Stomach (tissue), 19 donors: ENCODE measurements at regions of chr3 and their contacts with region 1.

Region 1: GRCh38 chr3:47522082-47522987 is 8.8 kb upstream of the ELP6 start:
- DNase-seq: peak; percentile 83 to 95
- H3K4me3 ChIP-seq: no peak overlapping the region
- H3K27ac ChIP-seq: no peak overlapping the region
- H3K4me1 ChIP-seq: peaks cover 0 to 12% (median 7%) of the 10 kb centered on the region in 4 donors
- H3K27me3 ChIP-seq: no peaks in the 10 kb centered on the region
- CTCF ChIP-seq: peak in 6 of 7 experiments; percentile 26 to 94 (median 85)
- EP300 ChIP-seq: no peak
- POLR2A ChIP-seq: no peak

Region 2: DNA sequence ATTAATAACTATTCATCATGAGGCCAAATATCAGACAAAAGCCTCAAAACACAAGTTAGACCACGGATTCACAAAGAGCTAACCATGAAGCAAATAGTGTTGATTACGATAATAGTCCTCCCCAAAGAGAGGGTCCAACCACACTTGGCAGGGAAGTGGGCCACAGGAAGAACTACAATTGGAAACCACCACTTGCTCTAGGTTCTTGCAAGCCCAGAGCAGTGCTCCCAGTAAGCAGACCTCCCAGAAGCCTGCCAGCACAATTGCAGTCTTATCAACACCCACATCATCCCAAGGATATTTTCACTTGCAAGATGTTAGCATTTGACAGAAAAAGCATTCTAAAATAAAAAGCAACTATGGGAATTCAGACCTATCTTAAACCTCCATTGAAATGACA is 369.8 kb before region 1 on chr3:
- intact Hi-C with region 1: no loop called
- DNase-seq: no peak
- H3K4me3 ChIP-seq: no peak overlapping the region
- H3K27ac ChIP-seq: no peak overlapping the region
- H3K4me1 ChIP-seq: peaks cover 24 to 88% (median 58%) of the 10 kb centered on the region in 4 donors
- H3K27me3 ChIP-seq: no peaks in the 10 kb centered on the region
- CTCF ChIP-seq: no peak
- EP300 ChIP-seq: no peak
- POLR2A ChIP-seq: no peak

Region 3: DNA sequence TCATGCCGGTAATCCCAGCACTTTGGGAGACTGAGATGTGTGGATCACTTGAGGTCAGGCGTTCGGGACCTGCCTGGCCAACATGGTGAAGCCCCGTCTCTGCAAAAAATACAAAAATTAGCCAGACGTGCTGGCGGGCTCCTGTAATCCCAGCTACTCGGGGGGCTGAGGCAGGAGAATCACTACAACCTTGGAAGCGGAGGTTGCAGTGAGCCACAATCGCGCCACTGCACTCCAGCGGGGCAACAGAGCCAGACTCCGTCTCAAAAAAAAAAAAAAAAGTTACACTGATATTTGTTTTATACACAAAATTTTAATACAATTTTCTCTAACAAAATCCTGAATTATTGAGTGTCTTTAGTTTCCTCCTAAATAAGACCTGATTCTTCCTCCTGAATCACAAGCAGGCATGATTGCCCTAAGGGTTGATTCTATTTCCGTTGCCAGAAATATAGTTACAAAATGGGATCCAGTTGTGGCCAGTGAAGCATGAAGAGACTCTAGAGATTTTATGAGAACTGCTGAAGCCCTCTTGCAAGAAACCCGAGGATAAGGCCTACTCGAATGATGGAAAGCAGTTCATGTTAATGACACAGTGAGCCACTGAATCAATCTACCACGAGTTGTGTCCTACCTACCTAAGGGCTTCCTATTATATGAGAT is 269.0 kb after region 1 on chr3:
- intact Hi-C with region 1: loop called (anchors 5 kb)
- DNase-seq: no peak
- H3K4me3 ChIP-seq: no peak overlapping the region
- H3K27ac ChIP-seq: no peak overlapping the region
- H3K4me1 ChIP-seq: peaks cover 0 to 7% (median 2%) of the 10 kb centered on the region in 4 donors
- H3K27me3 ChIP-seq: no peaks in the 10 kb centered on the region
- CTCF ChIP-seq: no peak
- EP300 ChIP-seq: no peak
- POLR2A ChIP-seq: no peak